Activated CD4-positive, alpha-beta memory T cell treated with anti-CD3 and anti-CD28 coated beads for 36 hours (primary cell): ENCODE measurements at regions of chr1 and their contacts with region 1.

Region 1: DNA sequence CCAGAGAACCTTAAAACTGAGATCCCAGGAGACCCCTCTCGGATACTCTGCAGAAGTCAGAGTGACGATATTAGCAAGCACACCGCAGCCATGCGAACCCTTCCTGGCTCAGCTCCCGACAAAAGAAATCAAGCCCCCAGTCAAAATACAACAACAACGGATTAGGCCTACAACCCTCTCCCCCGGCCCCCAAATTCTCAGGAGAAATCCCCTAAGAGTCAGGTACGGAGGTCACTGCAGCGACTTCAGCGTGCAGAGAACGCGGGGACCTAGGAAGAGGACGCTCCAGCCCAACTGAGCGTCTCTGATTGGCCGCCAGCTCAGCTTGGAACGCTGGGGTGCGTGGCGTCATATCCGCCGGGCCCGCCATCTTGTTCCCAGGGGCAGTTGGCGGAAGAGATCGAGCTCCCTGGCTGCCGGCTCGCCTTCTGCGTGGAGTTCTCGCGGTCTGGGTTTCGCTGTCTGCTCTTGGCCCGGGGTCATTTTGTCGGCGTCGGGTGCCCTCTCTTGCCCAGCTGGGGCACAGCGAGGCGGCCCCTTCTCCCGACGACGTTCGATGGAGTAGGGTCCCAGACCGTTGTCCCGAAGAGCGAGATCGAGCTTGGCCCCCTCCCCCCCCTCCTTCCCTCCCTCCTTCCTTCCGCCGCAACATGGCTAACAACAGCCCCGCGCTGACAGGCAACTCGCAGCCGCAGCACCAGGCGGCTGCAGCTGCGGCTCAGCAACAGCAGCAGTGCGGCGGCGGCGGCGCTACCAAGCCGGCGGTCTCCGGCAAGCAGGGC is at the start of gene PRPF38B:
- DNase-seq: peak; percentile 97
- H3K4me3 Mint-ChIP-seq: peak within 1 kb of the TSS; percentile 96
- H3K27ac Mint-ChIP-seq: peak within 1 kb of the TSS; percentile 99
- H3K4me1 Mint-ChIP-seq: peaks cover 37% of the 10 kb centered on the region
- H3K27me3 Mint-ChIP-seq: no peaks in the 10 kb centered on the region
- total RNA-seq, gene PRPF38B: 57.0 to 63.5 TPM

Region 2: GRCh38 chr1:108661030-108661620 is 31.0 kb before region 1 on chr1 and contains the start of gene HENMT1:
- CTCF ChIA-PET with region 1: interaction called, 13 read pairs
- POLR2A ChIA-PET with region 1: interaction called, 79 read pairs
- intact Hi-C with region 1: loop called (anchors 1 kb)
- DNase-seq: peak; percentile 86
- H3K4me3 Mint-ChIP-seq: peak within 1 kb of the TSS; percentile 82
- H3K27ac Mint-ChIP-seq: peak within 1 kb of the TSS; percentile 94
- H3K4me1 Mint-ChIP-seq: peaks cover 37% of the 10 kb centered on the region
- H3K27me3 Mint-ChIP-seq: no peaks in the 10 kb centered on the region
- total RNA-seq, gene HENMT1: 25.6 to 25.8 TPM

Region 3: GRCh38 chr1:108746372-108747205 is 54.5 kb after region 1 on chr1 and contains the start of gene STXBP3:
- CTCF ChIA-PET with region 1: interaction called, 8 read pairs
- POLR2A ChIA-PET with region 1: interaction called, 14 read pairs
- intact Hi-C with region 1: loop called (anchors 1 kb)
- DNase-seq: peak; percentile 100
- H3K4me3 Mint-ChIP-seq: peak within 1 kb of the TSS; percentile 95
- H3K27ac Mint-ChIP-seq: peak within 1 kb of the TSS; percentile 97
- H3K4me1 Mint-ChIP-seq: peaks cover 28% of the 10 kb centered on the region
- H3K27me3 Mint-ChIP-seq: no peaks in the 10 kb centered on the region
- total RNA-seq, gene STXBP3: 40.8 to 46.8 TPM

Region 4: DNA sequence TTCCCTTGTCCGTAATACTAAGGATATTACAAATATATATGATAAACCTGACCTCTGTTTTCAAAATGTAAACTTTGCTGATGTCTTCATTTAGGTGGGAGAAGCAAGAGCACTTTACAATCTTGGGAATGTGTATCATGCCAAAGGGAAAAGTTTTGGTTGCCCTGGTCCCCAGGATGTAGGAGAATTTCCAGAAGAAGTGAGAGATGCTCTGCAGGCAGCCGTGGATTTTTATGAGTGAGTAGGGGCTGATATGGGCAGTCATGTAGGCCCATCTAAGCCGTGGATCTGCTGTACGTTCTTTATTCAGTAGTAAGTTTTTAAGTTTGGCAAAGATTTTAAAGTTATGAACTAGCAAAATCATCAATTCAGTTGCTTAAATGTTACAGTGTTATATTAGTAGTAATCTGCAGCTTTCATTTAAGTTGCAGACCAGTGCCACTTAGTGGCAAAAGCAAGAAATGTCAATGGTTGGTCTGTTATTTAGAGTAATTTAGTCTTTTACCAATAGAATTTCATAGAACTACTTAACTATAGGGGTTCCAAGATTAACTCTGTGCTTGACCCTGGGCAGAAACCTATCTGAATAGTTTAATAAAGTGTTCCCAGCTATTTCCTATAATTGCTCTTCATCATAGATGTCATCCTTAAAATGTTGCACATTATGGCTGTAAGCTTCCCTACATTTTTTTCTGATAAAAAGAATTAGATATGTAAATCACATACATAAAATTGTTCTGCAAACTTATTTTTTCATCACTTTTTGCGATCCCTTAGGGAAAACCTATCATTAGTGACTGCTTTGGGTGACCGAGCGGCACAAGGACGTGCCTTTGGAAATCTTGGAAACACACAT is 206.0 kb after region 1 on chr1:
- CTCF ChIA-PET with region 1: interaction called, 4 read pairs
- POLR2A ChIA-PET with region 1: no interaction called
- intact Hi-C with region 1: loop called (anchors 2 kb)
- DNase-seq: no peak
- H3K4me3 Mint-ChIP-seq: no peak overlapping the region
- H3K27ac Mint-ChIP-seq: no peak overlapping the region
- H3K4me1 Mint-ChIP-seq: no peaks in the 10 kb centered on the region
- H3K27me3 Mint-ChIP-seq: no peaks in the 10 kb centered on the region